Psoas muscle (tissue), 8 donors: ENCODE measurements at regions of chr2 and their contacts with region 1.

Region 1: DNA sequence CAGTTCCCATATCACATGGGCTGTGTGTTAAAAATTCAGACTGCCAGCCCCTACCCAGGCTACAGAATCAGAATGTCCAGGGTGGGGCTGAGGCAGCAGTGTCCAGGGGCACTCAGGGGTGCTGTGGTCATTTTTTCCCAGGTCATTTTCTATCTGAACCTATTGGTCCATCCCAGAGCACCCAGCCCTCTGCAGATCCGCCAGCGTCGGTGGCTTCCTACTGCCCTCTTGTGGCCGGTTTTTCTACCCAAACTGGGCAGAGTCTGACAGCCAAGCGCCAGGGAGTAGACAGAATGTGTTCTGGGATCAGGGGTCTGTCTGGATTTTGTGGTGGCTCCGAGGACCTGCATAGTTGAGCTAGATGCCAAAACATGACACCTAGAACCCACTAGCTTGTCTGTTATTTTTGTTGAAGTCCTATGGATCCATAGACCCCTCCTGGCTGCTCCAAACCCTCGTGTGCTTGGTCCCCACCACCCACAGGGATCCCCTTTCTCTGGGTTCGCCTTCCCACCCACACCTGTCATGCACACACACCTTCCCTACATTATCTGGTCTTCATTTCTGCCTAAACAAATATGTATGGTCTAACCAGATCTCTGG is 34.1 kb upstream of the RMDN2 start:
- DNase-seq: peak; percentile 60 to 79
- ATAC-seq: peak; percentile 82 to 96 (median 90)
- H3K4me3 ChIP-seq: no peak overlapping the region
- H3K27ac ChIP-seq: no peak overlapping the region
- H3K4me1 ChIP-seq: no peaks in the 10 kb centered on the region
- H3K27me3 ChIP-seq: no peaks in the 10 kb centered on the region
- CTCF ChIP-seq: peak; percentile 82

Region 2: DNA sequence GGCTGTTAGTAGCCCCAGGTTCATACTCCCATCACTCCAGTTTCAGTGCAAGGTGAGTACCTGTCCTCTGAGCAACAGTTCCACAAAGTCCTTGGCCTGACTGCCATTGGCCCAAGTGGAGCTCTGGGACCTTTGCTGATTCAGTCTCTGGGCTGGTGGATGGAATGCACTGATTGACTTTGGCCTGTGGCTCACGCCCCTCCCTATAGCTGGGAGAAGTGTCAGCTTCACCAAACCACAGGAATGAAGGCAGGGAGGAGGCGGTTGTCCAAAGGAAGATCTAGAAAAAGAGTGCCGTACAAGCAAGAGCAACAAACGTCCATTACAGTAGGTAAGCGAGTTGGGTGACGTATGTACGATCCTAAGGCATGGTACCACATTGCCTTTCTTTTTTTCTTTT is 512.6 kb before region 1 on chr2:
- intact Hi-C with region 1: no loop called
- DNase-seq: peak in 1 of 2 donors; percentile 25
- ATAC-seq: peak in 3 of 4 donors; percentile 63 to 73 (median 66)
- H3K4me3 ChIP-seq: no peak overlapping the region
- H3K27ac ChIP-seq: peak overlapping the region; percentile 6
- H3K4me1 ChIP-seq: peaks cover 7% of the 10 kb centered on the region
- H3K27me3 ChIP-seq: no peaks in the 10 kb centered on the region
- CTCF ChIP-seq: no peak

Region 3: DNA sequence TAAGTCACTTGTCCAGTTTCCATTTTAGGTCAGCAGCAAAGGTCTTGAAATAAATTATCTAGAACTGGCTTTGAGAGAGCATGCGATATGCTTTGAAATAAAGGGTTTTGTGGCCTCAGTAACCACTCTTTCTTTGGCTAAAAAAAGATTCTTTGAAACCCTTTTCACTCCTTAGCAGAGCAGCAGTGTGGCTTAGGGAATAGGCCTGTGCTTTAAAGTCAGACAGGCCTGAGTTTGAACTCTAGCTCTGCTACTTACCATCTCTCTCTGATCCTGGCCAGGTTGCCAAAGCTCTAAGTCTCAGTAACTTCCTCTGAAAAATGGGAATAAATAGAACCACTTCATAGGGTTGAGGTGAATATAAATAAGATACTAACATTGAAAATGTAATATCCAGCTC is 493.8 kb before region 1 on chr2:
- intact Hi-C with region 1: loop called in 1 of 2 experiments (anchors 2 kb)
- DNase-seq: no peak
- ATAC-seq: no peak
- H3K4me3 ChIP-seq: no peak overlapping the region
- H3K27ac ChIP-seq: no peak overlapping the region
- H3K4me1 ChIP-seq: no peaks in the 10 kb centered on the region
- H3K27me3 ChIP-seq: no peaks in the 10 kb centered on the region
- CTCF ChIP-seq: no peak

Region 4: GRCh38 chr2:38264396-38265281 is 373.6 kb after region 1 on chr2:
- intact Hi-C with region 1: loop called in 1 of 2 experiments (anchors 10 kb)
- DNase-seq: no peak
- ATAC-seq: no peak
- H3K4me3 ChIP-seq: no peak overlapping the region
- H3K27ac ChIP-seq: no peak overlapping the region
- H3K4me1 ChIP-seq: no peaks in the 10 kb centered on the region
- H3K27me3 ChIP-seq: no peaks in the 10 kb centered on the region
- CTCF ChIP-seq: no peak